ENCODE measurements at regions of chr2 and their contacts with region 1.

Region 1: DNA sequence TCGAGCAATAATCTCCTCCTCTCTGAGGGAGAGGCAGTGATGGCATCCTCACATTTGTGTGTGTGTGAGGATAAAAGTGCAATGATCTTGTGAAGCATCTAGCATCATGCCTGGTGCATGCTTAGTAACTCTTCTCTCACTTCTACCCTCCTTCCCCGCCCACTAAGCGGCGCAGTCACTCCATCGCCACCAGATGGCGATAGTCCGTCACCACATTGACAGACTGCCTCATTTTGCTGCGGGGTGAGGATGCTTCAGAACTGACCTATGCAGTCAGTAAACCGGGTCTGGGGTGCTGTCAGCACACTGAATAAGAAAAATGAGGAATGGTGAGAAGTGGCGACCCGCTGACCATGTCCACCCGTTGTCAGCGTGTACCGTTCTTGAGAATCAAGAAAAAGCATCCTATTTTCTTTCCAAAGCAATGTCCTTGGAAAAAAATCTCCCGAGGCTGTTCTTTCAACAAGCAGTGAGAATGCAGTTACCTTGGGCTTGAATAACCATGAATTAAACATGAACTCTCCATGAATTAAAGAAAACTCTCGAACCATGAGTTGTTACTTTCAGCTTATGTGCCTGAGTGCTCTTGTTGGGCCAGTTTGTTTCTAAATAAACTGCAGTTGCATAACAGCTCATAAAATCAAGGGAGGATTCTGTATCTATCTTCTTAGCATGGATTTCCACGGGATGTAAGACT is 37.3 kb upstream of the TMEM177 start:
- DNase-seq: peak; percentile 73 to 79
- H3K4me3 ChIP-seq: no peak overlapping the region
- H3K4me3 Mint-ChIP-seq: no peak overlapping the region
- H3K27ac Mint-ChIP-seq: no peak overlapping the region
- H3K4me1 ChIP-seq: no peaks in the 10 kb centered on the region
- H3K4me1 Mint-ChIP-seq: peaks cover 5% of the 10 kb centered on the region
- H3K27me3 ChIP-seq: no peaks in the 10 kb centered on the region
- H3K27me3 Mint-ChIP-seq: peaks cover 27% of the 10 kb centered on the region
- CTCF ChIP-seq: peak; percentile 91 to 98

Region 2: DNA sequence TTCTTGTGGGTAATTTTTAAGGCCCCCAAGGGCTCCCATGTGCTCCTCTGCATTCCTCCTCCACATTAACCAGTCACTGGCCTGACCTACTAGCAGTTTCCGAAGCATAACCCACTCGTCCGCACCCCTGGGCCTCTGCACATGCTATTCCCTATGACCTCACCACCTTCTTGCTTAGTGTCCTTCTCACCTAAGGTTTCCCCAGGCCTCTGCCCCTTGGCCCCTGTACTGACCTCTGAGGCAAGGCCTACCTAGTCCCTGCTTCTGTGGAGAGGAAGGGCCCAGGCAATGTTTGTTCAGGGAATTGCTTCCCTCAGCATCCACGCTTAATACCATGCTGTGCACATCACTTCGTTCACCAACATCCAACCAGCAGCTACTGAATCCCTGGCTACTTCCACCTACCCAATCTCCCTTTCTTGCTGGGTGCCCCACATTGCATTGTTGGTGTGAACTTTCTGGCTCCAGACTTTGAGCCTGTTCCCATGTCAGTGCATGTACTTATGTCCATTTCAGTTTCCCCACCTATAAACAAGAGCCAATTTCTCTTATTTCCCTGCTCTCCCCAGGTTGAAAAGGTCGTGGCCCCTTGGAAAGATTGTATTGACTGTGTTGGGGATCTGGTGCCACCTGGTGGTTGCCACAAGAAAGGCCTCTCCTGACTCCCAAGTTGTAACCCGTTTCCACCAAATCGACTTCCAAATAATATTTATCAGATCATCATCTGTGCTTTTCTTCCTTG is 18.1 kb after region 1 on chr2:
- CTCF ChIA-PET with region 1: interaction called, 4 read pairs
- POLR2A ChIA-PET with region 1: no interaction called
- intact Hi-C with region 1: loop called (anchors 1 kb)
- DNase-seq: peak in 1 of 2 experiments; percentile 61
- H3K4me3 ChIP-seq: no peak overlapping the region
- H3K4me3 Mint-ChIP-seq: no peak overlapping the region
- H3K27ac Mint-ChIP-seq: no peak overlapping the region
- H3K4me1 ChIP-seq: no peaks in the 10 kb centered on the region
- H3K4me1 Mint-ChIP-seq: no peaks in the 10 kb centered on the region
- H3K27me3 ChIP-seq: no peaks in the 10 kb centered on the region; the same call in 1 of the 2 replicates
- H3K27me3 Mint-ChIP-seq: peaks cover 6% of the 10 kb centered on the region
- CTCF ChIP-seq: peak; percentile 84 to 90

Region 3: GRCh38 chr2:119678998-119679710 is 37.4 kb after region 1 on chr2 and contains the start of gene TMEM177:
- CTCF ChIA-PET with region 1: interaction called, 5 read pairs
- POLR2A ChIA-PET with region 1: no interaction called
- intact Hi-C with region 1: loop called (anchors 1 kb)
- DNase-seq: peak; percentile 92 to 95
- H3K4me3 ChIP-seq: peak within 1 kb of the TSS; percentile 93
- H3K4me3 Mint-ChIP-seq: peak within 1 kb of the TSS; percentile 92
- H3K27ac Mint-ChIP-seq: peak within 1 kb of the TSS; percentile 50
- H3K4me1 ChIP-seq: 0 out of 2 replicates have a peak, but pooled peaks cover 10% of the 10 kb centered on the region
- H3K4me1 Mint-ChIP-seq: no peaks in the 10 kb centered on the region
- H3K27me3 ChIP-seq: no peaks in the 10 kb centered on the region
- H3K27me3 Mint-ChIP-seq: no peaks in the 10 kb centered on the region
- CTCF ChIP-seq: no peak
- total RNA-seq, gene TMEM177: 35.7 and 36.7 TPM in 2 replicates

Region 4: DNA sequence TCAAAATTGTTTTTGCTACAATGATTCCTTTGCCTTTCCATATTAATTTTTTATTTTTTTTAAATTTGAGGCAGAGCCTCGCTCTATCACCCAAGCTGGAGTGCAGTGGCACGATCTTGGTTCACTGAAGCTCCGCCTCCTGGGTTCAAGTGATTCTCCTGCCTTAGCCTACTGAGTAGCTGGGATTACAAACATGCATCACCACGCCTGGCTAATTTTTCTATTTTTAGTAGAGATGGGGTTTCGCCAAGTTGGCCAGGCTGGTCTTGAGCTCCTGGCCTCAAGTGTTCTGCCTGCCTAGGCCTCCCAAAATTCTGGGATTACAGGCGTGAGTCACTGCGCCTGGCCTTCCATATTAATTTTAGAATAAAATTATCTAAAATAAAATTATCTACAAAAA is 159.3 kb after region 1 on chr2:
- CTCF ChIA-PET with region 1: no interaction called
- POLR2A ChIA-PET with region 1: no interaction called
- intact Hi-C with region 1: no loop called
- DNase-seq: no peak
- H3K4me3 ChIP-seq: no peak overlapping the region
- H3K4me3 Mint-ChIP-seq: no peak overlapping the region
- H3K27ac Mint-ChIP-seq: no peak overlapping the region
- H3K4me1 ChIP-seq: no peaks in the 10 kb centered on the region
- H3K4me1 Mint-ChIP-seq: no peaks in the 10 kb centered on the region
- H3K27me3 ChIP-seq: no peaks in the 10 kb centered on the region
- H3K27me3 Mint-ChIP-seq: no peaks in the 10 kb centered on the region
- CTCF ChIP-seq: no peak

Region 5: GRCh38 chr2:119826370-119826961 is 184.8 kb after region 1 on chr2:
- CTCF ChIA-PET with region 1: no interaction called
- POLR2A ChIA-PET with region 1: no interaction called
- intact Hi-C with region 1: loop called (anchors 5 kb)
- DNase-seq: peak; percentile 48 to 65
- H3K4me3 ChIP-seq: no peak overlapping the region
- H3K4me3 Mint-ChIP-seq: no peak overlapping the region
- H3K27ac Mint-ChIP-seq: no peak overlapping the region
- H3K4me1 ChIP-seq: 0 out of 2 replicates have a peak, but pooled peaks cover 4% of the 10 kb centered on the region
- H3K4me1 Mint-ChIP-seq: peaks cover 7% of the 10 kb centered on the region
- H3K27me3 ChIP-seq: no peaks in the 10 kb centered on the region
- H3K27me3 Mint-ChIP-seq: no peaks in the 10 kb centered on the region
- CTCF ChIP-seq: peak; percentile 71 to 90